Left ventricle myocardium inferior (tissue), 1 donor: ENCODE measurements at regions of chr22 and their contacts with region 1.

Region 1: DNA sequence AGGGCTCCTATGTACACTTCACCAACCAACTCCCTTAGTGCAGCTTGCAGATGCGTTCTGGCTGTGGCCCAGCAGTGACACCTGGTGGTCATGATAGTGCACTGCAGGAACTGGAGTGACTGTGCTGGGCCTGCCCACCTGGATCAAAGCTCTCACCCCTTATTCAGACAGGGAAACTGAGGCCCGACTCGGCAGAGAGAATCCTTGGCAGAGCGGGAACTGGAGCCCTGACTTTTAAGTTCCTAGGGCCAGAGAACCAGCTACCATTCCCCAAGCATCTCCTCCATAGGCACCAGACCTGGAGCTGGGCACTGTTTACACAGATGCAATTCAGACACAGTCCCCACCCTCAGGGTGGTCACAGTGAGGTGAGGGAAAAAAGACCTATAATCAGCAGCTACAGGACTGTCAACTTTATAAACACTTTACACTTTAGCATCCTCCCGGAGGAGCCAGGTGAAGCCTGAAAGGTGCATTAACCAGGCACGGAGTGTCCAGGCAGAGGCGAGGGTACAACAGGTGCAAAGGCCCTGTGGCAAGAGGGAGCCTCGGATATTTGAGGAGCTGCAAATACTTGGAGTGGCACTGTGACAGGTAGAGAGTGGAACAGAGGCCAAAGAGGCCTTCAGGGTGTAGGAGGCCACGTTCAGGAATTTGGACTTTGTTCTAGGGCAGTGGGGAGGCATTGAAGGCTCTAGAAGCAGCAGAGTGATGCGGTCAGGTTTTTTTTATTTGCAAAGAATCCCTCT is 22.0 kb downstream of the RHBDD3 start:
- DNase-seq: peak; percentile 66
- H3K4me3 ChIP-seq: no peak overlapping the region
- H3K27ac ChIP-seq: no peak overlapping the region
- H3K4me1 ChIP-seq: no peaks in the 10 kb centered on the region
- H3K27me3 ChIP-seq: no peaks in the 10 kb centered on the region
- CTCF ChIP-seq: peak; percentile 99

Region 2: DNA sequence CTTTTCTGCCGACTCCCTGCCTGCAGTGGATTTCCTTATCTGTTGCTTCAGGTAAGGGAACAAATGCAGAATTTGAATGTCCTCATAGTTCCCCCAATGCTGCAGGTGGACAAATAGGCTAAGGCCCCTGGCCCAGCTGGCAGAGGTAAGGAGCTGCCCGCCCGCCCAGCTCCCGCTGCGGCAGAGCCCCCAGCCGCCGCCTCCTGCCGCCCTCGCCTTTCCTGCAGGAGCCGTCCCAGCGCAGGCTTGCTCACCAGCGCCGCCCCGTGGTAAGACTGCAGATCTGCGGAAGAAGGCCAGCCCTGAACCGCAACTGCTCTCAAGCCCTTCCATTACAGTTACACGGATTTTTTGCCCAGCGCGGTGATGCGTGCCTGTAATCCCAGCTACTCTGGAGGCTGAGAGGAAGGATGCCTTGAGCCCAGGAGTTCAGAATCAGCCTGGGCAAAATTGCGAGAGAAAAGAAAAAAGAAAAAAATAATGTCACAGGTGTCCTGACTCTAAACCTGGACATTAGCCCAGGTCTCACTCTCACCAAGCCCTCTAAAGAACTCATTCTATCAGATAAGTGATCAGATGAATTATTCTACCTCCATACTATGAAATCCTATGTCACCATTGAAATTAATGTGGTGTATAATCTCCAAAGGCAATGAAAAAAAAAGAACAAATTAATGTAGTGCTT is 91.3 kb before region 1 on chr22:
- intact Hi-C with region 1: loop called (anchors 5 kb)
- DNase-seq: peak; percentile 73
- H3K4me3 ChIP-seq: peak overlapping the region; percentile 48
- H3K27ac ChIP-seq: no peak overlapping the region
- H3K4me1 ChIP-seq: peaks cover 40% of the 10 kb centered on the region
- H3K27me3 ChIP-seq: no peaks in the 10 kb centered on the region
- CTCF ChIP-seq: peak; percentile 98

Region 3: DNA sequence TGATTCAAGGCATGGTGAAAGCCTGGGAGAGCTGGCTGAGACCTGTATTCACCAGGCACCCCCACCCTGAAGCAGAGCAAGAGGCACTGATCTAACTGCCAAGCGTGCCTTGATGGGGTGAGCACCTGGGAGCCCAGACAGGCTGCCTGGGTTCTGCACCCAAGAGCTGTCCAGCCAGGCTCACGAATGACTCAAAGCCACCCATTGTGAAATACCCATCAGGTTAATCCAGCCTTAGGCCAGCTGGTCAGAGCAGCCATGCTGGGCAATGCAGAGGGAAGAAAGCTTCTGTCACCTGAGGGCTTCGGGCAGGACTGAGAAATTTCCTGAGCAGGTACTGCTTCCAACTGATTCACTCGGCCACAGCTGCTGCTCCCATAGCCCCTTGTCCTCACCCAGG is 285.6 kb after region 1 on chr22:
- intact Hi-C with region 1: no loop called
- DNase-seq: no peak
- H3K4me3 ChIP-seq: no peak overlapping the region
- H3K27ac ChIP-seq: no peak overlapping the region
- H3K4me1 ChIP-seq: no peaks in the 10 kb centered on the region
- H3K27me3 ChIP-seq: no peaks in the 10 kb centered on the region
- CTCF ChIP-seq: no peak